ENCODE measurements at regions of chr10 and their contacts with region 1.

Region 1: DNA sequence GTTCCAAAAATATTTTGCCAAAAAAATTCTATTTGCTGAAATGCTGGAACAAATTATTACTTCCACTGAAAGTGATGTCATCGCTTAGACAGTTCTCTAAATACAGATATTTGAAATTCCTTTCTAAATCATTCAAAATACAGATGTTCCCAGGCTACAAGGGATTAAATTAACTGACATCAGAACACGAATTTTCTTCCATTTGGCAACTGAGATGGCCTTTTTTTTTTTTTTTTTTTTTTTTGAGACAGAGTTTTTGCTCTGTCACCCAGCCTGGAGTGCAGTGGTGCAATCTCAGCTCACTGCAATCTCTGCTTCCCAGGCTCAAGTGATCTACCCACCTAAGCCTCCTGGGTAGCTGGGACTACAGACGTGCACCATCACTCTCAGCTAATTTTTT is 57.0 kb downstream of the P4HA1 start:
- DNase-seq: no peak
- ATAC-seq: peak; percentile 75

Region 2: DNA sequence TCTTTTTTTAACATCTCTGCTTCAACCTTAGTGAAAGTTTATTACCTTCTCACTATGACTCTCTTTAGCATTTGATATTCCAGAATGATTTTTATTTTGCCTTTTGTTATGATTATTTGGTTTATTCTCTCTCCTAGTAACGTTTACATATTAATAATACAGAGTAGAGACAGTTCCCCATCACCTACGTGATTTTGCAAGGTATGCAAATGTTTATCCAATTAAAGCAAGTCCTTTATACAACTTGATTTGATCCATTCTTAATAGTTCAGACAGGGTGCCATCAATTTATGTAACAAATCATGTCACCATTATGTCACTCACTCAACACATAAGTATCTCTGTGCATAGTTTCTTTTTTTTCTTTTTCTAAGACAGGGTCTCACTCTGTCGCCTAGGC is 102.0 kb after region 1 on chr10:
- intact Hi-C with region 1: loop called (anchors 10 kb)
- DNase-seq: no peak
- ATAC-seq: no peak

Measured in Right ventricle myocardium superior (tissue), 1 donor.